AG04450 (cell line): ENCODE measurements at regions of chr10 and their contacts with region 1.

Region 1: GRCh38 chr10:98309366-98310355 is 41.7 kb upstream of the LOXL4 start:
- DNase-seq: peak; percentile 75
- H3K4me3 ChIP-seq: peak overlapping the region; percentile 42
- H3K27ac ChIP-seq: peak overlapping the region; percentile 34
- H3K27me3 ChIP-seq: no peaks in the 10 kb centered on the region
- CTCF ChIP-seq: peak; percentile 87

Region 2: GRCh38 chr10:97780841-97781617 is 528.6 kb before region 1 on chr10:
- CTCF ChIA-PET with region 1: no interaction called
- POLR2A ChIA-PET with region 1: no interaction called
- DNase-seq: no peak
- H3K4me3 ChIP-seq: no peak overlapping the region
- H3K27ac ChIP-seq: no peak overlapping the region
- H3K27me3 ChIP-seq: peaks cover 25% of the 10 kb centered on the region
- CTCF ChIP-seq: no peak

Region 3: GRCh38 chr10:97914837-97915211 is 394.8 kb before region 1 on chr10:
- CTCF ChIA-PET with region 1: interaction called, 11 read pairs
- POLR2A ChIA-PET with region 1: no interaction called
- DNase-seq: no peak
- H3K4me3 ChIP-seq: no peak overlapping the region
- H3K27ac ChIP-seq: no peak overlapping the region
- H3K27me3 ChIP-seq: peaks cover 12% of the 10 kb centered on the region
- CTCF ChIP-seq: peak; percentile 86

Region 4: DNA sequence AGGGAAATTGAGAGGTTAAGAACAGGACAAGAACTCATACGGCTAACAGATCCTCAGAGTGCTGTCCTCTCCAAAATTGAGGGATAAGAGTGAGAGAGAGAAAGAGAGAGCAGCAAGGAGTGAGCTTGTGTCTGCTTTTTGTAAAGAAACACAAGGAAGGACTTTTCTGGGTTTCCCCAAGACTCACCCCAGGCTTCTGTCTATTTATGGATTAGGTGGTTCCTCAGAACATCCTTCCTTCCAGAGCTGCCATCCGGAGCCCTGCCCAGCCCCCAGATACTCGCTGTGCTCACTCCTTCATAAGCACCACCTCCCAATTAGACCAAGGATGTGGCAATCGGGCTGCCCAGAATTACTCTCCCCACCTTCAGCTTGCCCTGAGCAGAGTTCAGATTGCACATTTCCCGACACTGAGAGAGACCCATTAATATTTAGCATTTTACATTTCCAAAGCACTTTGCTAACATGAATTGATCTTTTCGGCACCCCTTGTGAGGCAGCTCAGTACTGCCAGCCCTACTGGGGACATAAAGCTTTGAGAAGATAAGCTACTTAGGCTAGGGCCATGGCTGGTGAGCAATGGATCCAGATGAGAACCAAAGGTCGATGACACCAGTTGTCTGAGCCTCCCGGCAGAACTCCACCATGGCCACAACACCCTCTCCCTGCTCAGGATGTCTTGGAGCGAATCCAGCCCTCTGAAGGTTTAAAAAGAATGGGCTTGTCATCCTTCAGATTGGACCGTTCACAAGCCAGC is 194.5 kb before region 1 on chr10:
- CTCF ChIA-PET with region 1: no interaction called
- POLR2A ChIA-PET with region 1: no interaction called
- DNase-seq: no peak
- H3K4me3 ChIP-seq: no peak overlapping the region
- H3K27ac ChIP-seq: no peak overlapping the region
- H3K27me3 ChIP-seq: peaks cover 19% of the 10 kb centered on the region
- CTCF ChIP-seq: no peak

Region 5: GRCh38 chr10:98262571-98262970 is 47.1 kb before region 1 on chr10:
- CTCF ChIA-PET with region 1: interaction called, 24 read pairs
- POLR2A ChIA-PET with region 1: interaction called, 4 read pairs
- DNase-seq: no peak
- H3K4me3 ChIP-seq: no peak overlapping the region
- H3K27ac ChIP-seq: no peak overlapping the region
- H3K27me3 ChIP-seq: no peaks in the 10 kb centered on the region
- CTCF ChIP-seq: peak; percentile 41

Region 6: DNA sequence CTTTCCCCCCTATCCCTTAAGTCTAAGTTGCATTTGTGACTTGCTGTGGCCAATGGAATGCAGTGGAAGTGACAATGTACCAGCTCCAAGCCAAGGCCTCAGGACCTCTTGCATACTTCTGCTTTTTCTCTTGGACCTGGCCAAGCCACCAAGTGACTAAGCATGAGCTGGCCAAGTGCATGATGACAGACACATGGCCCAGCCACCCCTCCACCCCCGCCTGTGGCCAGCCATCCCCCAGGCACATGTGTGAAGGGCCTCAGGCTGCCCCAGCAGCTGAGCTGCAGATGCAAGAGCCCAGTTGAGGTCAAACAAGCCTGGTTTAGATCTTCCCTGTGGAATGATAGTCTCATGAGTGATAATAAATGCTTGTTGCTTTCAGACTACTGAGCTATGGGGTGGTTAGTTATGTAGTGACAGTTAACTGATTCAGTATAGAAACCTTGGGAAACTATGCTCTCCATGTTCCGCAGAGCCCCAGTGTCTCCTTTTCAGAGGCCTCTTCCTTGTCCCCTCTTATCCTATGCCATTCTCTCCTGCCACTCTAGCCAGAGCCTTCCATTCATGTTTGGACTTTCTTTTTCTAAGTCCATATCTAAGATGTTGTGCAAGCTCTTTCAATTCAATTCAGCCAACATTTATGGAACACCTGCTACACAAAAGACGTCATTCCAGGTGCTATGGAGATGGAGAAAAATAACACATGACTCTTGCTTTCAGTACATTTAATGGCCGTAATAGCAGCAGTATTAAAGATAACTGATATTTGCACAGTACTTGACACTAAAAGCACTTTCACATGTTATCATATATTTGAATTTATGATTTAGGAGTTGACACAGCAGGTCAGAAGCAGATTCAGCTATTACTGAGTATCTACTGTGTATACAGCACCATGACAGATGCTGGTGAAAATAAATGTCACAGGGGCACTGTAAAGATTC is 13.8 kb after region 1 on chr10:
- CTCF ChIA-PET with region 1: interaction called, 29 read pairs
- POLR2A ChIA-PET with region 1: no interaction called
- DNase-seq: peak; percentile 87
- H3K4me3 ChIP-seq: no peak overlapping the region
- H3K27ac ChIP-seq: peak overlapping the region; percentile 71
- H3K27me3 ChIP-seq: no peaks in the 10 kb centered on the region
- CTCF ChIP-seq: no peak

Region 7: DNA sequence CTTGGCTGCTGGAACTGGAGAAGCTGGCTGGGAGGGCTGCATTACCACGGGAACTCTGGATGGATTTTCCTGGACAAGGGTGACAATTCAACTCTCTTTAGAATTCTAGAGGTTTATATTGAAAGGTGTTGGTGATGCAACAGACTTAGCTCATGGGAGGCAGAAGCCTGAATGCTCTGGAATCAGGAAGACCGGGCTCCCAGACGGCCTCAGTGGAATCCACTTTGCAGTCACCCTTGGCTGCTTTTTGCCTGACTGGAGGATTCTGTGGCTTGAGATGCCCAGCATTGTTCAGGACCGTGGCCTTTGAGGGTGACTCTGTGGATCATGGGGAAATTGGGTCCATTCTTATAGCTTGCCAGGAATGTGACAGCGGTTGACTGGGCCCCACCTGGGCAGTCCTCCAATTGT is 73.0 kb after region 1 on chr10:
- CTCF ChIA-PET with region 1: interaction called, 19 read pairs
- POLR2A ChIA-PET with region 1: no interaction called
- DNase-seq: no peak
- H3K4me3 ChIP-seq: no peak overlapping the region
- H3K27ac ChIP-seq: peak overlapping the region; percentile 55
- H3K27me3 ChIP-seq: no peaks in the 10 kb centered on the region
- CTCF ChIP-seq: no peak

Region 8: DNA sequence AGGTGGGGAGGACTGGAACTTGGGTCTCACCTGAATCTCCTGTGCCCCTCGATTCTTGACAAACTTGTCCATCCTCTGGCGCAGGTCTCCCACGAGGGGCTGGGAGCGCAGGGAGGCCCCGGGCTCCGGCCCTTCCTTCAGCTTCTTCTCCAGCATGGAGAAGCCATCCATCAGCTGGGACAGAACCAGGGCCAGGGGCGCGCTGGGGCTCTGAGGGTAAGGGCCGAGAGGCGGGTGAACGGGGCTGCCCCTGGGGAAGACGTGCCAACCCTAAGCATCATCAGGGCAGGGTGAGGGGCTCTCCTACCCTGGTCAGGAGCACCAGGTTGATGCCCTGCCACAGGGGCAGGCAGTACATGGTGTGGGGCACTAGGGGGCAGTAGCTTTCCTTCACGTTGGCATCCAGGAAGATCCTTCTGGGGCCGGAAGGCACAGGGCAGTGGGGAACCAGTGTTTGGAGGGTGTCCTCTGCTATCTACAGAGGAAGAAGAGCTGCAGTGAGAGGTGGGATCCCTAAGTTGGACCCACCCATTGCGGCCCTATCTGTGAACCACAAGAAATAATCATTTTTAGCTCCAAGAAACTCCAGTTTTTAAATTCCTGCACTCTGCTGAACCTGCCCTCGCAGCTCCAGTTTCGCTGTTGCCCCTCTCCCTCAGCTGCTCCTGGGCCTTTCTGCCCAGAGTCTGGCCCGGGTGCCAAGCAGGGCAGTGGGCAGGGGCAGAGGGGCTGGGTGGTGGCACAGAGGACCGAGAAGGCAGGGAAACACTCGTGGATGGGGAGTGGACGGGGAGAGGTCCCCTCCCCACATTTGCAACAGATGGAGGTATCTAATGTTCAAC is 116.1 kb after region 1 on chr10:
- CTCF ChIA-PET with region 1: interaction called, 13 read pairs
- POLR2A ChIA-PET with region 1: no interaction called
- DNase-seq: no peak
- H3K4me3 ChIP-seq: no peak overlapping the region
- H3K27ac ChIP-seq: no peak overlapping the region
- H3K27me3 ChIP-seq: no peaks in the 10 kb centered on the region
- CTCF ChIP-seq: peak; percentile 68